ENCODE measurements at regions of chr20 and their contacts with region 1.

Region 1: GRCh38 chr20:31842471-31843157 is 2.8 kb downstream of the FOXS1 start:
- DNase-seq: peak in 1 of 2 experiments; percentile 45
- ATAC-seq: peak; percentile 22 to 44; a peak in 4 of 6 replicates
- H3K4me3 ChIP-seq: no peak overlapping the region
- H3K27ac ChIP-seq: peak overlapping the region; percentile 85 to 86
- H3K4me1 ChIP-seq: peaks cover 84% of the 10 kb centered on the region
- CTCF ChIP-seq: no peak
- EP300 ChIP-seq: no peak
- POLR2A ChIP-seq: no peak
- RAD21 ChIP-seq: no peak

Region 2: GRCh38 chr20:31869942-31870725 is 27.5 kb after region 1 on chr20 and contains the starts of genes DUSP15 and TTLL9:
- CTCF ChIA-PET with region 1: interaction called, 15 read pairs
- POLR2A ChIA-PET with region 1: no interaction called
- DNase-seq: no peak
- ATAC-seq: peak; percentile 66 to 83
- H3K4me3 ChIP-seq: peak within 1 kb of the TSS; percentile 70
- H3K27ac ChIP-seq: peak within 1 kb of the TSS; percentile 66 to 90
- H3K4me1 ChIP-seq: peaks cover 12% of the 10 kb centered on the region; the same call in 2 of the 3 replicates
- CTCF ChIP-seq: no peak
- EP300 ChIP-seq: no peak
- POLR2A ChIP-seq: no peak; the same call in 1 of the 2 replicates
- RAD21 ChIP-seq: no peak
- polyA plus RNA-seq, gene DUSP15: 0.46 and 0.53 TPM in 2 replicates
- polyA plus RNA-seq, gene TTLL9: 0.06 and 0.08 TPM in 2 replicates

Measured in A549 (cell line).